Endothelial cell of umbilical vein (primary cell): ENCODE measurements at regions of chr22 and their contacts with region 1.

Region 1: GRCh38 chr22:17501679-17502285 is 61.5 kb upstream of the SLC25A18 start:
- DNase-seq: peak; percentile 79
- H3K4me3 ChIP-seq: no peak overlapping the region
- H3K27ac ChIP-seq: no peak overlapping the region
- H3K4me1 ChIP-seq: no peaks in the 10 kb centered on the region
- H3K27me3 ChIP-seq: peaks cover 0 to 2% of the 10 kb centered on the region in 2 experiments
- CTCF ChIP-seq: peak; percentile 43 to 46
- POLR2A ChIP-seq: no peak

Region 2: DNA sequence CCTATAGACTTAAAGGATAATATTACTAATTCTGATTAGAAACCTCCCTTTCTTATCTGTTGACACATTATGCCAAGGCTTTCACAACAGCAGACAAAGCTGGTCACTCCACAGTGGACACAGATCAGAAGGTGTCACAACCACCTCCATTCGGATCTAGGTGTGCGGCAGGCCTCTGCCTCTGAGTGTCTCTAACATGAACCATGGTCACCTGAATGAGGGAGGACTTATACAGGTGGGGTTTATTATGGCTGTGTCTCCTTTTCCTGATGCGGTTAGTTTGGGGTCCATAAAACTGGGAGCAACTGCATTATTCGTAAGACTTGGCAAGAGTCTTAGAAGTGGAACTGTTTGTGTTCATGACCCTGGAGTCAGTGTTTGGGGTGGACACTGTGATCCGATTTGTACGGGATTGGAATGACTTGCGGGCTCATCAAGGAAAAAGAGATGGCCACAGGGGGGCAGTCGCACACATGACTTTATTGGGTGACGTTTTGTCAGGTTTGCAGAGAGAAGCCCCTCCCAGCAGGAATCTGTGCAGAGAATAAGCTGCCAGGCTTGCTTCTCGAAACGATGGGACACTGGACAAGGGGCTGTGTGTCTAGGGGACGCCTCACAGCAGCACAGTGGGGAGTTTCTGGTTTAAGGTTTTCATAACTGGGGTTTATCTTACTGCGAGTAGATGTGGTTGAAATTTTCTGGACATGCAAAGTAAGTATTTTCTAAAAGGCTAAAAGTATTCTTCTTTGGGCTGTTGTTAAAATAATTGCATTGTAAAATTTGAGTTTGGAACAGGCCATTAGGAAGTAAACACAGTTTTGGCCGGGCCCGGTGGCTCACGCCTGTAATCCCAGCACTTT is 584.4 kb before region 1 on chr22:
- CTCF ChIA-PET with region 1: interaction called, 14 read pairs
- POLR2A ChIA-PET with region 1: no interaction called
- dilution Hi-C with region 1: no loop called
- intact Hi-C with region 1: loop called (anchors 1 kb)
- DNase-seq: peak; percentile 70
- H3K4me3 ChIP-seq: no peak overlapping the region
- H3K27ac ChIP-seq: no peak overlapping the region
- H3K4me1 ChIP-seq: no peaks in the 10 kb centered on the region
- H3K27me3 ChIP-seq: peaks cover 0 to 2% of the 10 kb centered on the region in 2 experiments
- CTCF ChIP-seq: peak; percentile 59 to 64
- POLR2A ChIP-seq: no peak

Region 3: GRCh38 chr22:17077255-17077654 is 424.5 kb before region 1 on chr22:
- CTCF ChIA-PET with region 1: interaction called, 209 read pairs
- POLR2A ChIA-PET with region 1: no interaction called
- dilution Hi-C with region 1: no loop called
- intact Hi-C with region 1: loop called (anchors 1 kb)
- DNase-seq: no peak
- H3K4me3 ChIP-seq: no peak overlapping the region
- H3K27ac ChIP-seq: no peak overlapping the region
- H3K4me1 ChIP-seq: peaks cover 3% of the 10 kb centered on the region
- H3K27me3 ChIP-seq: no peaks in the 10 kb centered on the region
- CTCF ChIP-seq: no peak
- POLR2A ChIP-seq: no peak

Region 4: DNA sequence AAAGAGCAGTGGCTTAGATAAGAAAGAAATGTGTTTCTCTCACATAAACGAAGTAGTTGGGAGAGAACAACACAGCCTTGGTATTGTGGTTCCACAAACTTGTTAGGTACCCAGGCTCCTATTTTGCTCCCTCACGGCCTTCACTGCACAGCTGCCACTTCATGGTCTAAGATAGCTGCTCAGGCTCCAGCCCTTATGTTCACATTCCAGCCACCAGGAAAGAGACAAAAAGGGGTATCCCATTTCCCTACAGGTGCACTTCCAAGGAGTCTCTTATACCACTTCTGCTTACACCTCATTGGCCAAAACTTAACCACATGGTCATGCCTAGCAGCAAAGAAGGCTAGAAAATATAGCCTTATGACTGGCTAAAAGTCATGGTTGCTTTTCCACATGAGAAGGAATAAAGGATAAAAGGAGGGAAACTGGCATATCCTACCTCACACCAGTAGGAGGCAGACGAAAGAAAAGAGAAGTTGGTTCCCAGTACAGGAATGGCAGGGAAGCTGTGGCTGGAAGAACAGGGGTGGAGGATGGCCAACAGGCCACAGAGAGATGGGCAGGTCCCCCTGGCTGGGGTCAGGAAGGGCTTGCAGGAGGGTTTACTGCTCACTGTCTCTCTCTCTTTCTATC is 337.3 kb before region 1 on chr22:
- CTCF ChIA-PET with region 1: interaction called, 21 read pairs
- POLR2A ChIA-PET with region 1: no interaction called
- dilution Hi-C with region 1: no loop called
- intact Hi-C with region 1: no loop called
- DNase-seq: no peak
- H3K4me3 ChIP-seq: no peak overlapping the region
- H3K27ac ChIP-seq: no peak overlapping the region
- H3K4me1 ChIP-seq: peaks cover 6% of the 10 kb centered on the region
- H3K27me3 ChIP-seq: no peaks in the 10 kb centered on the region
- CTCF ChIP-seq: peak; percentile 8 to 15
- POLR2A ChIP-seq: no peak

Region 5: DNA sequence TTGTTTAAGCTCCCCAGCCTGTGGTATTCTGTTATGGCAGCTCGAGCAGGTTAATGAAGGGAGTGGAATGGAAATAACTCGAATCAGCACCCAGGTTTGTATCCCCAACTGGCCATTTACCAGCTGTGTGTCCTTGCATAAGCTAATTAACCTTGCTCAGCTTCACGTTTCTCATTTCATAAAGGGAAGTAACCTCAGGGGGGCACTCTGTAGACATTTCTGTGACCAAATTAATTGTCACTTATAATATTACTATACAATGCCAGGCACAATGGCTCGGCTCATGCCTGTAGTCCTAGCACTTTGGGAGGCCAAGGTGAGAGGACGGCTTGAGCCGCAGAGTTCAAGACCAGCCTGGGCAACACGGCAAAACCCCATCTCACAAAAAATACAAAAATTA is 296.4 kb before region 1 on chr22:
- CTCF ChIA-PET with region 1: interaction called, 36 read pairs
- POLR2A ChIA-PET with region 1: no interaction called
- dilution Hi-C with region 1: no loop called
- intact Hi-C with region 1: no loop called
- DNase-seq: no peak
- H3K4me3 ChIP-seq: no peak overlapping the region
- H3K27ac ChIP-seq: no peak overlapping the region
- H3K4me1 ChIP-seq: no peaks in the 10 kb centered on the region
- H3K27me3 ChIP-seq: peaks cover 2 to 3% of the 10 kb centered on the region in 2 experiments
- CTCF ChIP-seq: no peak
- POLR2A ChIP-seq: no peak

Region 6: DNA sequence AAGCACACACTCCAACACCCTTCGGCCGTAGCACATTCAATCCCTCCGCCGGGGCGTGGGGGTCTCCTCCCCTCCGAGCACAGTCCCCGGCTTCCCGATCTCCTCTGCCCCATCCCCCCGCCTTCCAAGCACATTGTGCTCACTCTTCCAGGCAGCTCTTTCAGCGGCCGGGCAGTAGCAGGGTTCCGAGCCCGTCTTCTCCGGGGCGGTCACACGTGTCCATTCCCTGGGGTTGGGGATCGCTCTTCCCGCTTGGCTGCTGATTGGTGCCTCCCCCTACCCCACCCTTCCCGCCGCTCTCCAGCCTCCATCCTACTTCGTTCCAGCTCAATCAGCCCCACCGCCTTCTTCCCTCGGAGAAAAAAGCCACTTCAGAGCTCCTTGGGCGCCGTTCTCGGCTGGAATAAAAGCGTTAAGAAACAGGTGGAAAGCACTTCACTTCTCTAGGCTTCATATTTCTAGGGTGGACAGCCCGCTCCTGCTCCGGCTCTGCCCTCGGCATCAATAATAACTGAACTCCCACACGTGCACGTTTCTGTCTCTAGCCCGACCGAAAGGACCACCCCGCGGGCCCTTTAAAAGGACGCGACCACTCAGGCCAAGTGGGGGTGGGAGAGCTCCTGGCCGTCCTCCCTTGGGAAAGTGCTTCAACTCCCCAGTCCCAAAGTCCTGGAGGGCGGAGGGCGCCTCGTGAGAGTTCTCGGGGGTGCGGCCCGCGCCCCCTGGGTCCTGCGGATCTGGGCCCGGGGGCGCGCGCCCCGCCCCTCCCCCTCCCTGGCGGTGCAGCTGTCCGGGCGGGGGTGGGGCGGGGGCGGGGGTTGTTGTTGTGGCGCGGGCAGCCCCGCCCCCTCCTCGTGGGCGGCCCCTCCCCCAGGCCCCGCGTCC is 133.0 kb before region 1 on chr22:
- CTCF ChIA-PET with region 1: interaction called, 62 read pairs
- POLR2A ChIA-PET with region 1: no interaction called
- dilution Hi-C with region 1: no loop called
- intact Hi-C with region 1: loop called (anchors 1 kb)
- DNase-seq: no peak
- H3K4me3 ChIP-seq: no peak overlapping the region
- H3K27ac ChIP-seq: no peak overlapping the region
- H3K4me1 ChIP-seq: peaks cover 13% of the 10 kb centered on the region
- H3K27me3 ChIP-seq: peaks cover 40 to 49% of the 10 kb centered on the region in 2 experiments
- CTCF ChIP-seq: no peak
- POLR2A ChIP-seq: no peak